ENCODE measurements at regions of chr7 and their contacts with region 1.

Region 1: DNA sequence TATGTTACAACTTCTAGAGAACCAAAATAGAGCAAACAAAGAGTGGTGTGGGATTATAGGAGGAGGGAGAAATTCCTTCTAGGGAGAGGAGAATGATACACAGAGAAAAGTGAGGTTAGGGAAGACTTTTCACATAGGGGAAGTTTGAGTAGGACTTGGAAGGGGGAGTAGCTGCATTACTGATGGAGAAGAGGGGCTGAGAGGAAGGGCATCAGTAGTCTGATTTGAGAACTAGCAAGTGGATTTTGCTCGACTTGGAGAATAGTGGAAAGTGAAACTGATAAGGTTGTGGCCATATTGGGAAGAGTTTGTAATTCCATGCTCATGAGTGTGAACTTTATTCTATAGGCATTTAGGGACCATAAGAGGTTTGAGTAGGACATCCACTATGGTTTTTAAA is 6.1 kb downstream of the NRF1 start:
- DNase-seq: no peak
- ATAC-seq: no peak
- H3K4me3 ChIP-seq: no peak overlapping the region
- H3K27ac ChIP-seq: peak overlapping the region in 1 of 10 donors; percentile 36
- H3K4me1 ChIP-seq: peaks cover 0 to 61% (median 42%) of the 10 kb centered on the region in 9 donors
- H3K27me3 ChIP-seq: no peaks in the 10 kb centered on the region
- CTCF ChIP-seq: no peak

Region 2: GRCh38 chr7:129605960-129606614 is 11.6 kb before region 1 on chr7:
- intact Hi-C with region 1: loop called in 1 of 10 experiments (anchors 2 kb)
- DNase-seq: no peak
- ATAC-seq: no peak
- H3K4me3 ChIP-seq: no peak overlapping the region
- H3K27ac ChIP-seq: no peak overlapping the region
- H3K4me1 ChIP-seq: peaks cover 0 to 37% (median 12%) of the 10 kb centered on the region in 9 donors
- H3K27me3 ChIP-seq: no peaks in the 10 kb centered on the region
- CTCF ChIP-seq: no peak